OCI-LY7 (cell line): ENCODE measurements at regions of chr21 and their contacts with region 1.

Region 1: DNA sequence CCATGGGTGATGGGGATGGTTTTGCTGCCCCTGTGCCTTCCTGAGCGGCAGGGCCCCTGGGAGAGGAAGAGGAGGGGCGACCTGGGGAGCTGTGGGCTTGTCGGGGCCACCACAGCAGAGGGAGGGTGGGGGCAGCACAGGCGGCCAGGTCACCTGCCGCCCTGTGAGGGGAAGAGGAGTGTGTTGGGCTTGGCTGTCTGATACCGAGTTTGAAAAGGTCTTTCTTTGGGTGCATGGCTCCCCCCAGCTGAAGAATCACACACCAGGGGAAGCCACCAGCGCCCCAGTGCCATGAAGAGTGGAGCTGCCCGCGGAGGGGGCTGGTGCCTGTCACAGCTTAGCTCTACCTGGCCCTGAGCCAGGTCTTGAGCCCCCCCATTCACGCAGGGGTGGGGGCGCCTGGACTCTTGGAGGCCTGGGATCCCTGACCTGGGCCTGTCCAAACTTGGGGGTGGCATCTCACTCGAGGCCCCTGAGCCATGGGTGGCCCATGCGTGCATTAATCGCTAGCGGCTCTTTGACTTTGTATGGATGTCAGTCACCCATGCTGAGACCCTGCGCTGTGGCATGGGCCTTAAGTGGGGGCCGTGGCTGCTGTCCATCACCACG is 26.4 kb downstream of the CSTB start:
- DNase-seq: no peak
- H3K4me3 ChIP-seq: no peak overlapping the region
- H3K27ac ChIP-seq: no peak overlapping the region
- H3K4me1 ChIP-seq: no peaks in the 10 kb centered on the region
- CTCF ChIP-seq: no peak

Region 2: GRCh38 chr21:43959231-43960116 is 209.7 kb after region 1 on chr21:
- CTCF ChIA-PET with region 1: no interaction called
- POLR2A ChIA-PET with region 1: interaction called, 12 read pairs
- intact Hi-C with region 1: no loop called
- DNase-seq: no peak
- H3K4me3 ChIP-seq: no peak overlapping the region
- H3K27ac ChIP-seq: no peak overlapping the region
- H3K4me1 ChIP-seq: peaks cover 5% of the 10 kb centered on the region
- CTCF ChIP-seq: no peak